ENCODE measurements at regions of chr1 and their contacts with region 1.

Region 1: GRCh38 chr1:110338886-110339406 is at the start of gene RBM15:
- DNase-seq: peak; percentile 99
- H3K4me3 Mint-ChIP-seq: no peak within 1 kb of the TSS
- H3K27ac Mint-ChIP-seq: no peak within 1 kb of the TSS
- H3K4me1 Mint-ChIP-seq: peaks cover 48% of the 10 kb centered on the region
- H3K27me3 Mint-ChIP-seq: no peaks in the 10 kb centered on the region
- total RNA-seq, gene RBM15: 91.0 to 91.5 TPM

Region 2: DNA sequence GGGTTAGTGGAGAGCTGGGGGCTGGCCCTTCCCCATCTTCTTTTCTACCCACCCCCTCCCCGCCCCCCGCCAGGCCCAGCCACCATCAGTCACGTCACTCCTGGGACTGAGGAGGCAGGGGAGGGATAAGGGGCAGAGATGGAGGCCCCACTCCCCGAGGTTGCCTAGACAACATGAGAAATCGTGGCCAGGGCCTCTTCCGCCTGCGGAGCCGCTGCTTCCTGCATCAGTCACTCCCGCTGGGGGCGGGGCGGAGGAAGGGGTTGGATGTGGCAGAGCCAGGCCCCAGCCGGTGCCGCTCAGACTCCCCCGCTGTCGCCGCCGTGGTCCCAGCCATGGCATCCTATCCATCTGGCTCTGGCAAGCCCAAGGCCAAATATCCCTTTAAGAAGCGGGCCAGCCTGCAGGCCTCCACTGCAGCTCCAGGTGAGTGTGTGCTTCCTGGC is 718.1 kb before region 1 on chr1:
- CTCF ChIA-PET with region 1: no interaction called
- intact Hi-C with region 1: loop called (anchors 5 kb)
- DNase-seq: peak; percentile 98
- H3K4me3 Mint-ChIP-seq: peak overlapping the region; percentile 93
- H3K27ac Mint-ChIP-seq: peak overlapping the region; percentile 91
- H3K4me1 Mint-ChIP-seq: peaks cover 57% of the 10 kb centered on the region
- H3K27me3 Mint-ChIP-seq: no peaks in the 10 kb centered on the region

Region 3: GRCh38 chr1:110203021-110203661 is 135.8 kb before region 1 on chr1:
- CTCF ChIA-PET with region 1: interaction called, 81 read pairs
- intact Hi-C with region 1: loop called (anchors 1 kb)
- DNase-seq: peak; percentile 88
- H3K4me3 Mint-ChIP-seq: no peak overlapping the region
- H3K27ac Mint-ChIP-seq: peak overlapping the region; percentile 81
- H3K4me1 Mint-ChIP-seq: peaks cover 21% of the 10 kb centered on the region
- H3K27me3 Mint-ChIP-seq: no peaks in the 10 kb centered on the region

Region 4: DNA sequence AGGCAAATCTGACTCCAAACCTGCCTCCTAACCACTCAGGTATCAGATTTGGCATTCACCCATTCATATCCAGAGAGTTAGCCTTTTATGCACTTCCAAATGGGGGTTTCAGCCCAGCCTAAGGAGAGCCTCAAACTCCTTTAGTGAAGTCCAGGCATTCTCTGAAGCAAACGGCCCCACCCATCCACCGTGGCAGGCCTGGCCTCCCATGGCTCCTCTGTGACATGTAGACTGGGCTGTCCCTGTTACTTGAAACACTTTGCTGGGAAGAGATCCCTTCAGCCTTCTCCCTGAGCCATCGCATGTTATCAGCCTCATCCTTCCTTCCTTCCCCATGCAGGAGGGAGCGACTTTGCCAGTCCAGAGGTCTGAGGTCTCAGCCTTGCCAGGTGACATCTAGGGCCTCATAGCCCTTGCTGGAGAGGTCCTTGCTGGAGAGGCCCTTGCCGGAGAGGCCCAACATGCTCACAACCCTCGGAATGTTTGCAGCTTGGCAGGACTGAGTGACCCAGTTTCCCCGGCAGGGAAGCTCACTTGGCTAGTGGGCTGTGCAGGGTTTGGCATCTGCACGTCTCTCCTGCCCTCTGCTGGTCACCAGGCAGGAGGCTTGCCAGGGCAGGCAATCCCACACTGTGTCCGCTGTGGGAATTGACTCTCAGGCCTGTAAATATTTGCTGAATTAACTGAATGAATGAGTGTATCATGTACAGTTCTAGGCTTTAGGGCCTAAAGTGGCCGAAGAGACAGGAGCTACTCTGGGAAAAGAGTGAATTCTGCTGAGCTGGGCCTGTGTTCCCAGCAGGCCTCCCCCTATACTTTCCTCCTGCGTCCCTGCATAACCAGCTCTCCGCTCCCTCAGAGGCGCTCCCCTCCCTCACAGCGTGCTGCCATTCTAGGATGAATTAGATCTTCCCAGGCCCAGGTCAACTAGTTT is 26.5 kb before region 1 on chr1:
- CTCF ChIA-PET with region 1: interaction called, 31 read pairs
- intact Hi-C with region 1: no loop called
- DNase-seq: peak; percentile 81
- H3K4me3 Mint-ChIP-seq: no peak overlapping the region
- H3K27ac Mint-ChIP-seq: no peak overlapping the region
- H3K4me1 Mint-ChIP-seq: no peaks in the 10 kb centered on the region
- H3K27me3 Mint-ChIP-seq: no peaks in the 10 kb centered on the region

Region 5: DNA sequence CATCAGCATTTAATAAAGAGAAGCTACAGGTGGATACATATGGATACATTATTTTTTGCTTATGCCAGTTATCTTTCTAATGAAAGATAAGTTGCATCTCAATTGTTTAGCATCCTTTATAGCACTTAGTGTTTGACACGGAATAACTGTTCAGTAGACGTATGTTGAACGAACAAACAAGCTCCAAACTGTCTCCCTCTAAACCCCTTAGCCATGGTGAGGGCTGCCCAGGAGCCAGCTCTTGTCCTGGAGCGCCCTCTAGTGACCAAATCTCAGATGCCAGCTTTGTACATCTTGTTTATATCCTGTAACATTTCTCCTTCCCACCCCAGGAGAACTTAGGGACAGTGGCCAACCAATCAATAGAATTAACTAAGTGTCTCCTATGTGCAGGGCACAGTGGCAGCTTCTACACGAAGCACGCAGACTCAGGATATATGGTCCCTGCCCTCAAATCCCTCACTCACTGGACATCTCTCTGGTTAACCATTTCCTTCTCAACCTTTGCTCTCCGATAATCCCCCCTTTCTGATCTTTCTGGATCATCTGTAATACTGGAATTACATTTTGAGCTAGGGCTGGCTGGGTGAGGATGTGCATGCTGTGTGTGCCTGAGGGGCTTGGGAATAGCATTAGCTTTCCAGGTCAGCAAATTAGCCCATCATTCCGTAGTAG is 157.1 kb after region 1 on chr1:
- CTCF ChIA-PET with region 1: interaction called, 15 read pairs
- intact Hi-C with region 1: no loop called
- DNase-seq: peak; percentile 91
- H3K4me3 Mint-ChIP-seq: no peak overlapping the region
- H3K27ac Mint-ChIP-seq: peak overlapping the region; percentile 1
- H3K4me1 Mint-ChIP-seq: no peaks in the 10 kb centered on the region
- H3K27me3 Mint-ChIP-seq: no peaks in the 10 kb centered on the region

Region 6: GRCh38 chr1:111222308-111223125 is 883.6 kb after region 1 on chr1:
- CTCF ChIA-PET with region 1: no interaction called
- intact Hi-C with region 1: loop called (anchors 10 kb)
- DNase-seq: peak; percentile 90
- H3K4me3 Mint-ChIP-seq: peak overlapping the region; percentile 53
- H3K27ac Mint-ChIP-seq: peak overlapping the region; percentile 99
- H3K4me1 Mint-ChIP-seq: peaks cover 94% of the 10 kb centered on the region
- H3K27me3 Mint-ChIP-seq: no peaks in the 10 kb centered on the region

Measured in activated naive CD4-positive, alpha-beta T cell treated with anti-CD3 and anti-CD28 coated beads for 36 hours (primary cell).